ENCODE measurements at regions of chr2 and their contacts with region 1.

Region 1: DNA sequence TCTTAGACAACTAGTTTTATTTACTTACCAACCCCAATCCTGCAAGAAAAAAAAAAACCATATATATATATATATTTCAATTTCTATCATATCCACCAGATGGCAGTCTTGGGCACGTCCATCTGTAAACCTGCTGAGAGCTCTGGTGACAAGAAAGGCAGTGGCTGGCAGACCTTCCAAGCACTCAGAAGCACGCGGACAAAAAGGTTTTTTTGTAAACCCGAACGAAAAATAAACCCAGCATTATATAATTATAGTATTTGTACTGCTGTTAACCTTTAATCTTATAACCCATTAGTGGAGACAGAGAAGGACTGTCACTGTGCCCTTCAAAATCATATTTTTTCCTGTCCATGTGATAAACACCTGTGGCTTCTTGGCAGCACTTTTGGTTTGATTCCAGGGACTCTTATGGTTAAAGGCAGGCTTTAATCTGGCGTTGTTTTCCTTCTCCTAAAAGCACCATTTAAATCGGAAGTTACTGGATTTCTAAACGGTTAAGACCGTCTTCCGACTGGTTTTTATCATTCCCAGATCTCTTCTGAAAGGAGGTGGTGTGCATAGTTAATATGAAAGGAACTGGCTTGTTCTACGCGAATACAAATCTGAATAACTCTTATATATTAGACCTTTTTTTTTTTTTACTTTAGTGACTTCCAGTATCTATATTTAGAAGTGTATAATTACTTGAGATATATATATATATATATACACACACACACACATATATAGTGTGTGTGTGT is 31.0 kb upstream of the SLC3A1 start:
- DNase-seq: peak; percentile 37
- H3K4me3 ChIP-seq: peak overlapping the region in 2 of 3 experiments; percentile 39 to 46
- H3K27ac ChIP-seq: no peak overlapping the region
- H3K4me1 ChIP-seq: peaks cover 13% of the 10 kb centered on the region
- H3K27me3 ChIP-seq: no peaks in the 10 kb centered on the region
- CTCF ChIP-seq: peak; percentile 30 to 60

Region 2: GRCh38 chr2:44087036-44087713 is 157.1 kb before region 1 on chr2:
- CTCF ChIA-PET with region 1: no interaction called
- dilution Hi-C with region 1: no loop called
- in situ Hi-C with region 1: loop called in 1 of 2 experiments (anchors 25 kb)
- intact Hi-C with region 1: loop called (anchors 1 kb)
- DNase-seq: peak; percentile 56
- H3K4me3 ChIP-seq: peak overlapping the region in 1 of 3 experiments; percentile 16
- H3K27ac ChIP-seq: no peak overlapping the region
- H3K4me1 ChIP-seq: no peaks in the 10 kb centered on the region
- H3K27me3 ChIP-seq: no peaks in the 10 kb centered on the region
- CTCF ChIP-seq: peak; percentile 86 to 94

Region 3: GRCh38 chr2:44107085-44107740 is 137.1 kb before region 1 on chr2:
- CTCF ChIA-PET with region 1: no interaction called
- dilution Hi-C with region 1: no loop called
- in situ Hi-C with region 1: no loop called
- intact Hi-C with region 1: no loop called
- DNase-seq: no peak
- H3K4me3 ChIP-seq: no peak overlapping the region
- H3K27ac ChIP-seq: no peak overlapping the region
- H3K4me1 ChIP-seq: no peaks in the 10 kb centered on the region
- H3K27me3 ChIP-seq: peaks cover 3% of the 10 kb centered on the region
- CTCF ChIP-seq: no peak

Region 4: DNA sequence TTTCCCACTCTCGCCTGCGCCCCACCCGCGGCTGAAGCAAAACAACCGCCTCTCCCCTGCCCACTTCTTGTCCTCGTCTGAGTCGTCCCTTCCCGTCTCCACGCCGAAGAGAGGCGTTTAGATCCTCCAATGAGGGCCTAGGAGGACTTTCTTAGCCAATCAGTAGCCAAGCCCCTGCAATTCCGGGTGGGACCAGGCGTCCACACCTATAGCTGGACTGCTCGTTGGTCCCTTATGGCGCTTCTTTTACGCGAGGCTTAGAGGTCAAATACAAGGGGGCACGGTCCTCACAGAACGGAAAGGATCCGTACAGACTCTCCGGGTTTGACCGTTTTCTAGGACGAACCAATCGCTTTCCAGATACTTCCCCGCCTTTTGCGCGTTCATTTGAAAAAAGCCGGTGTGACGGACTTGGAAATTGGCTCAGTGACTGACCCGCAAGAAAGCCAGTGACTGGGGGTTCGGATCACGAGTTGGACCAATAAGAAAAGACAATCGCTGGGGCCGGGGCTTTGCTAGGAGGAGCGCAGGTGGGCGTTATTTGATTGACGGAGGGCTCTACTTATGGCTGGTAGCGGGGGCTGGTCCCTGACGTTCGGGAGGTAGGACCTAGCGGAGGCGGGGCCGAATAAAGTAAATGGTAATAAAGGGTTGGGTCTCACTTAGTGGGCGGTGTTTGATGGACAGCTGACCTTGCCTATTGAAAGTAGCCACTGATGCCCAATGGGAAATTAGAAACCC is 76.2 kb before region 1 on chr2:
- CTCF ChIA-PET with region 1: no interaction called
- dilution Hi-C with region 1: no loop called
- in situ Hi-C with region 1: no loop called
- intact Hi-C with region 1: loop called (anchors 5 kb)
- DNase-seq: peak; percentile 100
- H3K4me3 ChIP-seq: peak overlapping the region; percentile 47 to 71 (median 51)
- H3K27ac ChIP-seq: peak overlapping the region; percentile 89
- H3K4me1 ChIP-seq: peaks cover 10% of the 10 kb centered on the region
- H3K27me3 ChIP-seq: no peaks in the 10 kb centered on the region
- CTCF ChIP-seq: no peak

Region 5: DNA sequence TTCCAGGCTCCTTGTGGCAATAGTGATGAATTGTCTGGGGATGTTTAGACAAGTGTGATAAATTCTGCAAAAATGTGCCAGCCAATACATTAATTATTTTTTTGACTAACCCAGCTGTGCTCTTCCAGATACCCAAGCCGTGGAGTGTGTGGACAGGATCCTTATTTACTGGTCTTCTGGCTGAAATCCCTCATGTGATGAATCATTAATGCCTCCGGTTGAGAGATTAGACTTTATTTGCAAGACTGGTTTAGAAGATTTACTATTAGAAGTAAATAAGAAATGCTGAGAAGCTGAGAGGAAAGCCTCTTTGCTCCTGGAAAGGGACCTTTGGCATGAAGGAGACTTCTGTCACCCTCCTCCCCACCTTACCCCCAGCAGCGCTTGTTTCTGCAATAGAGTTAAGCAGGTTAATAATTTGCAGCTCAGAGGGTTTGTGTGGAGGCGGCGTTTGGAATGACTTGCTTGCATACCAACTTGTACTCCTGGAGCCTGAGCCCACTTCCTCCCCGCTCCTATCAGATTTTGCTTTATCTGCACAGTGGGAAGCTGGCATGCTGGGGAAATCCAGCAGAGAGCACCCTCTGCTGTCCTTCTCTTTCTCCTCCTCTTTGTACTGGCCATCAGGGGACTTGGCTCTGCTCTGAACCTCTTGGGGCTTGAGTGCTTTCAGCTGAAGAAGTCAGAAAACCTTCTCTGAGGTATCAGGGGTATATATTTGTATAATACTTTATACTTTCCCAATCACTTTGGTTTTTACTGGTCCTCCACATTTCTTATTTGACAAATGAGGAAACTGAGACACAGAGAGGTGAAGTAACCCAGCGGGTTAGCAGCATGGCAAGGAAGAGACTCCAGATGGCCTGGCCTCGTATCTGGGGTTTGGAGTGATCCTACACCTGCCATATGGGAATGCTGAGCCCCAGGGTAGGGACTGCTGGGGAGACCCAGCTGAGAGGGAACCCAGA is 47.3 kb after region 1 on chr2:
- CTCF ChIA-PET with region 1: interaction called, 3 read pairs
- dilution Hi-C with region 1: no loop called
- in situ Hi-C with region 1: no loop called
- intact Hi-C with region 1: loop called (anchors 1 kb)
- DNase-seq: peak; percentile 85
- H3K4me3 ChIP-seq: peak overlapping the region in 1 of 3 experiments; percentile 7
- H3K27ac ChIP-seq: no peak overlapping the region
- H3K4me1 ChIP-seq: peaks cover 26% of the 10 kb centered on the region
- H3K27me3 ChIP-seq: no peaks in the 10 kb centered on the region
- CTCF ChIP-seq: peak; percentile 52 to 62

Region 6: GRCh38 chr2:44342854-44343253 is 98.6 kb after region 1 on chr2:
- CTCF ChIA-PET with region 1: no interaction called
- dilution Hi-C with region 1: no loop called
- in situ Hi-C with region 1: no loop called
- intact Hi-C with region 1: loop called (anchors 2 kb)
- DNase-seq: no peak
- H3K4me3 ChIP-seq: no peak overlapping the region
- H3K27ac ChIP-seq: no peak overlapping the region
- H3K4me1 ChIP-seq: no peaks in the 10 kb centered on the region
- H3K27me3 ChIP-seq: no peaks in the 10 kb centered on the region
- CTCF ChIP-seq: peak; percentile 23 to 43

Region 7: DNA sequence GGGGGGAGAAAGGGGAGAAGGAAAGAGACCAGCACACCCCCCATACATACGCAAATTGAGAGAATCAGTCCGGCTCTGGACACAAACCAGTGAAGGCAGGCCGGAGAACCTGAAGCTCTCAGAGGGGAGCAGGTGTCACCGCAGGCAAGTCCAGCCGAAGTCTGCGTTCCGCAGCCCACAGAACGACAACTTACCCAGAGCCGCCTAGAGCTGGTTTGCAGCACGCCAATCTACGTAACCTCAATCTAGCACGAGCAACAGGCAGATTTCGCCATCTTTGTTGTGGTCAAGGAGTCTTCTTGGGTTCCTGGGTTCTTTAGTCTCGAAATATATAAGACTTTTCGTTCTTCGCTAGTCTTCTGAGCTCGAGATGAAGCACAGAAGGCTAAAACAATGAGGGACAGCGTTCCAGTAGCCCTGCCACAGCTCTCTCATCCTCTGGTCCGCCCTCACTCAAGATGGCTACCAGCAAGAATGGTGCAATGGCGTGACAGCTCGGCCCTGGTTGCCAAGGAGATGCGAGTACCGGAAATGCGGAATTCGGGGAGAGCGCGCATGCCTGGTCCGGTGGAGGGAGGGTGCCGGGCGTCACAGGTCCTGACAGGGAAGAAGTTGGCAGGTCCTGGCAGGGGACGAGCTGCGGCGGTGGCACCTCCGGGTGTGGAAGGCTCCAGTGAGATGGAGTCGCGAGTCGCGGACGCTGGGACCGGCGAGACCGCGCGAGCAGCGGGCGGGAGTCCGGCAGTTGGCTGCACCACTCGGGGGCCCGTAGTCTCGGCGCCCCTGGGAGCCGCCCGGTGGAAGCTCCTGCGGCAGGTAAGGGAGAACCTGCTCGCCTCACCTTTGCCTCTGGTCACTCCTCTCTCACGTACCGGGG is 117.3 kb after region 1 on chr2 and contains the starts of genes CAMKMT and PREPL:
- CTCF ChIA-PET with region 1: no interaction called
- dilution Hi-C with region 1: no loop called
- in situ Hi-C with region 1: no loop called
- intact Hi-C with region 1: loop called (anchors 2 kb)
- DNase-seq: peak; percentile 96
- H3K4me3 ChIP-seq: peak within 1 kb of the TSS; percentile 60 to 85 (median 69)
- H3K27ac ChIP-seq: peak within 1 kb of the TSS; percentile 100
- H3K4me1 ChIP-seq: peaks cover 12% of the 10 kb centered on the region
- H3K27me3 ChIP-seq: no peaks in the 10 kb centered on the region
- CTCF ChIP-seq: no peak
- total RNA-seq, gene CAMKMT: 13.5 to 16.5 TPM
- total RNA-seq, gene PREPL: 28.2 to 31.0 TPM

Region 8: GRCh38 chr2:44974064-44974715 is 729.9 kb after region 1 on chr2:
- CTCF ChIA-PET with region 1: no interaction called
- dilution Hi-C with region 1: no loop called
- in situ Hi-C with region 1: no loop called
- intact Hi-C with region 1: loop called (anchors 5 kb)
- DNase-seq: peak; percentile 53
- H3K4me3 ChIP-seq: no peak overlapping the region
- H3K27ac ChIP-seq: no peak overlapping the region
- H3K4me1 ChIP-seq: peaks cover 5% of the 10 kb centered on the region
- H3K27me3 ChIP-seq: no peaks in the 10 kb centered on the region
- CTCF ChIP-seq: peak; percentile 54 to 78